ENCODE measurements at regions of chr18 and their contacts with region 1.

Region 1: DNA sequence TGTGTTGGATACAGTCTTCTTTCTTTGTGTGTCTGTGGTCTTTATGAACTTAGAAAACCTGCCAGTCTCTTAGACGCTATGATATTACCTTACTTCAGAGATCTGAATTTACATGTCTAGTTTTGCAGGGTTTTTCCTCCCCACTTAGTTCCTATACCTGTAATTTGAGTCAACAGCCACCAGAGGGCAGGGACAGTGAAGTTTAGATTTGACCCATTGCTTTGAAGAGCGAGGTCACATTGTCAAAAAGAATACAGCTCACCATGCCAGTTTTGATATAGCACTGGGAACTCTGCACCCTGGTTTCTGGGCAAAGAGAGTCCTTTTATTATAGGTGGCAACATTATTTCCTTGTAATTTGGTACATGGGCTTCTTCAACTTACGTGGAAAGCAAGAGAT is 102.3 kb downstream of the MAPK4 start:
- DNase-seq: no peak
- ATAC-seq: no peak
- H3K4me3 ChIP-seq: no peak overlapping the region
- H3K27ac ChIP-seq: peak overlapping the region in 3 of 10 donors; percentile 4 to 44 (median 15)
- H3K4me1 ChIP-seq: peaks cover 0 to 51% (median 24%) of the 10 kb centered on the region in 9 donors
- H3K27me3 ChIP-seq: no peaks in the 10 kb centered on the region
- CTCF ChIP-seq: peak in 6 of 9 donors; percentile 10 to 35 (median 25)

Region 2: GRCh38 chr18:50388988-50389387 is 273.2 kb before region 1 on chr18:
- intact Hi-C with region 1: no loop called
- DNase-seq: no peak
- ATAC-seq: no peak
- H3K4me3 ChIP-seq: no peak overlapping the region
- H3K27ac ChIP-seq: no peak overlapping the region
- H3K4me1 ChIP-seq: no peaks in the 10 kb centered on the region
- H3K27me3 ChIP-seq: no peaks in the 10 kb centered on the region
- CTCF ChIP-seq: no peak

Region 3: DNA sequence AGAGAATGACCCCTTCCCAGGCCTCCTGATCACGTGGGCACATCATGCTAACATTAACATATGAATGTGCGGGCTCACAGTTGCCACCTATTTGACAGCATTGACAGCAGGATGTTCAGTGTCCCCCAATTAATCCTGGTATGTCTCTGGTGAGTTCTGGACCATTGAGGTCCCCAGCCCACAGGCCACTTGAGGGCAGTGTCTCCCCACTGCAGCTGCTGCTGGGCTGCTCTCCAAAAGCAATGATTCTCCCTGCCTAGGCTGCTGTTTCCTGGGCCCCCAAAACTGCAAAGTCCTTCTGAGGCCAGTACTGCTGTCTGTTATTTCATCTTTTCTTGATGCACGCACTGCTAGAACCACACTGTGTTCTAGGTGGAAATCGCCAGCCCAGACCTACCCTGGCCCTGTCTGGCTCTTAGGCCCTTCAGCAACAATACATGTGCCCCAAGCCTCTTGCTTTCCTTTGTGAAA is 155.0 kb before region 1 on chr18:
- intact Hi-C with region 1: loop called in 2 of 10 experiments (anchors 10 kb)
- DNase-seq: peak; percentile 15 to 42
- ATAC-seq: peak in 6 of 8 donors; percentile 73 to 95 (median 90)
- H3K4me3 ChIP-seq: no peak overlapping the region
- H3K27ac ChIP-seq: no peak overlapping the region
- H3K4me1 ChIP-seq: no peaks in the 10 kb centered on the region
- H3K27me3 ChIP-seq: no peaks in the 10 kb centered on the region
- CTCF ChIP-seq: peak; percentile 36 to 75 (median 65)

Region 4: GRCh38 chr18:50559752-50560680 is 102.2 kb before region 1 on chr18 and contains the start of gene MAPK4:
- intact Hi-C with region 1: loop called in 1 of 10 experiments (anchors 10 kb)
- DNase-seq: peak in 1 of 2 donors; percentile 55
- ATAC-seq: peak; percentile 76 to 93 (median 88)
- H3K4me3 ChIP-seq: peak within 1 kb of the TSS; percentile 51 to 74 (median 62)
- H3K27ac ChIP-seq: peak within 1 kb of the TSS in 9 of 10 donors; percentile 1 to 81 (median 67)
- H3K4me1 ChIP-seq: peaks cover 0 to 17% (median 11%) of the 10 kb centered on the region in 9 donors
- H3K27me3 ChIP-seq: peaks cover 0 to 67% (median 36%) of the 10 kb centered on the region in 7 donors
- CTCF ChIP-seq: no peak
- total RNA-seq, gene MAPK4: 15.2 to 86.9 (median 37.1) TPM

Region 5: GRCh38 chr18:50586710-50587109 is 75.5 kb before region 1 on chr18:
- intact Hi-C with region 1: loop called in 1 of 10 experiments (anchors 5 kb)
- DNase-seq: no peak
- ATAC-seq: no peak
- H3K4me3 ChIP-seq: no peak overlapping the region
- H3K27ac ChIP-seq: no peak overlapping the region
- H3K4me1 ChIP-seq: peaks cover 0 to 13% (median 0%) of the 10 kb centered on the region in 9 donors
- H3K27me3 ChIP-seq: no peaks in the 10 kb centered on the region
- CTCF ChIP-seq: peak in 2 of 9 donors; percentile 6 to 19

Region 6: GRCh38 chr18:50726960-50727589 is 64.9 kb after region 1 on chr18:
- intact Hi-C with region 1: loop called in 1 of 10 experiments (anchors 5 kb)
- DNase-seq: no peak
- ATAC-seq: peak in 6 of 8 donors; percentile 7 to 57 (median 34)
- H3K4me3 ChIP-seq: no peak overlapping the region
- H3K27ac ChIP-seq: peak overlapping the region; percentile 36 to 80 (median 69)
- H3K4me1 ChIP-seq: peaks cover 4 to 43% (median 22%) of the 10 kb centered on the region in 9 donors
- H3K27me3 ChIP-seq: peaks cover 0 to 4% (median 0%) of the 10 kb centered on the region in 7 donors
- CTCF ChIP-seq: no peak

Region 7: DNA sequence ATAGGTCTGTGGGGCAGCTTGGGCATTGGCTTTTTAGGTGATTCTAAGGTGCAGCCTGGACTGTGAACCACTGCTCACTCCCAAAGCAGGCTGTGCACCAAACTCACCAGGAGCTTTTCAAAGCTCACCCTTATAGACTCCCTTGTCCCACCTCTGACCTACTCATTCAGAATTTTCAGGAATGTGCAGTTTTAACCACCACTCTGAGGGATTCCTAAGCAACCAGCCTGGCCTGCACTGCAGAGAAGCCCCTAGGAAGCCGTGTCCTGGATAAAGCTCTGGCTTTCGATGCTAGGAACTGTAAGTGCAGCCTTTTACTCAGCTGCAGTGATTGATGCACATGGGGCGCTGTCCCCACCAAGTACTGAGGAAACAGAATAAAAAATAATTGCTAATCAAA is 124.7 kb after region 1 on chr18:
- intact Hi-C with region 1: loop called in 1 of 10 experiments (anchors 10 kb)
- DNase-seq: no peak
- ATAC-seq: no peak
- H3K4me3 ChIP-seq: no peak overlapping the region
- H3K27ac ChIP-seq: no peak overlapping the region
- H3K4me1 ChIP-seq: no peaks in the 10 kb centered on the region
- H3K27me3 ChIP-seq: no peaks in the 10 kb centered on the region
- CTCF ChIP-seq: no peak

Measured in heart right ventricle (tissue), 16 donors.